IMR-90 (cell line): ENCODE measurements at regions of chr10 and their contacts with region 1.

Region 1: GRCh38 chr10:127254276-127254675 is 57.9 kb upstream of the INSYN2A start:
- DNase-seq: no peak
- ATAC-seq: no peak
- H3K4me3 ChIP-seq: no peak overlapping the region
- H3K27ac ChIP-seq: no peak overlapping the region
- H3K4me1 ChIP-seq: no peaks in the 10 kb centered on the region
- H3K27me3 ChIP-seq: no peaks in the 10 kb centered on the region
- CTCF ChIP-seq: no peak
- POLR2A ChIP-seq: no peak
- RAD21 ChIP-seq: no peak

Region 2: DNA sequence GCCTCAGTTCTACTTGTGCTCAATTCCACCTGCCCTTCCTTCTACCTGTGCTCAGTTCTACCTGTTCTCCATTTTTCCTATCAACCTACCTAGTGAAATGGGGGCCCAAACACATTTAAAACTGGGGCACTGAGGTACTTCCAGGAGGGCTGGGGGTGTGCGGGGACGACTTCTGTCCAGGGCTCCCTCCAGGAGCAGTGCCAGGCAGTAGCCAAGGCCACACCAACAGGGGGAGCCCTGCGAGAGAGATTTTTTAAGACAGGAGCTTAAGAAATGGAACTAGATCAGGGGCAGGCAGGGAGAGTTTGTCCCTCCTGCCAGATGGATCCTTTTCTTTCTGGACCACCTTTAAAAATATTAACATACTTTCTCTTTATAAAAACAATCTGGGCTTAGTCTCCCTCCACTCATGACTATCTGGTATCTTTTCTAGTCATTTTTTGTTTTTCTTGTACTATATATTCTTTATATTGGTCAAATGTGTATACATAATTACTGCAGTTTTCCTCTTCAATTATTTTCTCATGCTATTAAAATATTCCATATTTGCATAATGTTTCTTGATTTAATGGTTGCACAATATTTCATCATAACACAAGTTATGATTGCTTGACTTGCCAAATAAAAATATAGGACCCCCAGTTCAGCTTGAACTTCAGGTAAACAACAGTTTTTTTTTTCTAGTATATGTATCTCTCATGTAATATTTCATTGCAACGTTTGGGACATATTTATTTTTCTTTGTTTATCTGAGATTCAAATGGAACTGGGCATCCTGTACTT is 10.6 kb before region 1 on chr10:
- CTCF ChIA-PET with region 1: interaction called, 10 read pairs
- POLR2A ChIA-PET with region 1: no interaction called
- dilution Hi-C with region 1: no loop called
- in situ Hi-C with region 1: no loop called
- intact Hi-C with region 1: no loop called
- DNase-seq: peak; percentile 30
- ATAC-seq: peak; percentile 62
- H3K4me3 ChIP-seq: no peak overlapping the region
- H3K27ac ChIP-seq: no peak overlapping the region
- H3K4me1 ChIP-seq: peaks cover 3% of the 10 kb centered on the region; the same call in 1 of the 2 replicates
- H3K27me3 ChIP-seq: no peaks in the 10 kb centered on the region
- CTCF ChIP-seq: peak; percentile 51
- POLR2A ChIP-seq: no peak
- RAD21 ChIP-seq: peak; percentile 37; the same call in 1 of the 2 replicates